Naive thymus-derived CD8-positive, alpha-beta T cell (primary cell): ENCODE measurements at regions of chr7 and their contacts with region 1.

Region 1: DNA sequence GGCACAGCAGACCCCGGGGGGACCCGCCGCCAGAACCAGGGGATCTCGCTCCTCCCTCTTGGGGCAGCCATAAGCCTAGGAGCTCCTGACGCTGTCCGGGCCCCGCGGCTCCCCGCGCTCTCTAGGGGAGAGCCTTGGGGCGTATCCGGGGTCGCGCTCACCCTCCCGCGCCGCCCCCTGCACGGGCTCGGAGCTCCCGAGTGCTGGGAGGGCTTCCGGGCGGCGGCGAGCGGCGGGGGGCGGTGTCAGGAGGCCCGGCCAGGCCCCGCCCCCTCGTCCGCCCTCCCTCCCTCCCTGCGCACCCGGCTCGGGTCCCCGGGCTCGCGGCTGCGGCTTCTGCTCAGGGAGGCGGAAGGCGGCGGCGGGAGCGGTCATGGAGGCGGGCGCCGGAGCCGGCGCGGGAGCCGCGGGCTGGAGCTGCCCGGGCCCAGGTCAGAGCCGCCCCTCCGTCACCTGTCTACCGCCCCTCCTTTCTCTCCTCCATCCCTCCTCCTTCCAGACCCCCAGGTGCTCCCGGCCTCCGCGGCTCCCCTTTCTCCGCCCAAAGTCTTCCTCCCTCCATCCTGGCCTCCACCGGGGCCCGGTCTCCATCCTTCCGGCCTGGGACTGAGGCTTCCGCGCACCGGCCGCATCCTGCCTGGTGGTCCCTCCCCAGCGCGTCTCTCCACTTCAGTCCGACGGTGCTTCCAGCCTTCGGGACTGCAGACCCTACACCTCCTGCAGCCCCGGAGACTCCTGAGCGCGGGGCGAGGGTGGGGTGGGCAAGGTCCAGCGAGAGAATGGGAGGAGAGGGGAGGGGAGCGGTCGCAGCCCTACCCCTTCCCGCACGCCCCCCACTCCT is 427 bp upstream of the CCDC136 start:
- DNase-seq: peak; percentile 63 to 91 (median 81)
- ATAC-seq: peak; percentile 90 to 91
- H3K4me3 Mint-ChIP-seq: peak overlapping the region; percentile 74 to 91 (median 86)
- H3K27ac Mint-ChIP-seq: peak overlapping the region in 8 of 10 donors; percentile 38 to 83 (median 73)
- H3K4me1 Mint-ChIP-seq: peaks cover 9 to 22% (median 20%) of the 10 kb centered on the region in 4 donors
- H3K27me3 Mint-ChIP-seq: no peaks in the 10 kb centered on the region

Region 2: DNA sequence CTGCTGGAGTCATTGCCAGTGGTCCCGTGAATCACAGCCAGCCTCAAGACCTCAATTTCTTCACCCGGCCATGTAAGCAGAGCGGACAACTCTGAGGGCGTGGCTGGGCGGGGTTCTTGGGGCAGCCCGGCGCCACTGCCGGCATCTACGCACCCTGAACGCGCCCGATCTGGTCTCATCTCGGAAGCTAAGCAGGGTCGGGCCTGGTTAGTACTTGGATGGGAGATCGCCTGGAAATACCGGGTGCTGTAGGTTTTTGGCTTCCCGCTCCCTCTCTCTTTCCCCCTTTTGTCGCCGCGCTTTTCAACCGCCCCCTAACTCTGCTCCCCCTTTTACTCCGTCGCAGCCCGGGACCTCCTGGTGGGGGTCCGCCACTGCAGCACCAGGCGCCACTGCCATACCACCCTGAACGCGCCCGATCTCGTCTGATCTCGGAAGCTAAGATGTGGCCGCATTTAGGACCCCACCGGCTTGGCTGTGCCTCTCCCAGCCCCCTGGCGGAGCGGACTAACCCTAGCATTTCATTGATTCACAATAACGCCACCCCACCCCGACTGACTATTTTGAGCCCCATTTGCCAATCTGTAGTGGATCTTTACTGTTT is 93.9 kb before region 1 on chr7:
- POLR2A ChIA-PET with region 1: no interaction called
- DNase-seq: peak in 9 of 10 donors; percentile 11 to 55 (median 36)
- ATAC-seq: peak; percentile 68 to 70
- H3K4me3 Mint-ChIP-seq: peak overlapping the region; percentile 62 to 87 (median 78)
- H3K27ac Mint-ChIP-seq: peak overlapping the region in 1 of 10 donors; percentile 11
- H3K4me1 Mint-ChIP-seq: peaks cover 7 to 17% (median 9%) of the 10 kb centered on the region in 4 donors
- H3K27me3 Mint-ChIP-seq: peaks cover 39 to 80% (median 57%) of the 10 kb centered on the region in 5 donors

Region 3: DNA sequence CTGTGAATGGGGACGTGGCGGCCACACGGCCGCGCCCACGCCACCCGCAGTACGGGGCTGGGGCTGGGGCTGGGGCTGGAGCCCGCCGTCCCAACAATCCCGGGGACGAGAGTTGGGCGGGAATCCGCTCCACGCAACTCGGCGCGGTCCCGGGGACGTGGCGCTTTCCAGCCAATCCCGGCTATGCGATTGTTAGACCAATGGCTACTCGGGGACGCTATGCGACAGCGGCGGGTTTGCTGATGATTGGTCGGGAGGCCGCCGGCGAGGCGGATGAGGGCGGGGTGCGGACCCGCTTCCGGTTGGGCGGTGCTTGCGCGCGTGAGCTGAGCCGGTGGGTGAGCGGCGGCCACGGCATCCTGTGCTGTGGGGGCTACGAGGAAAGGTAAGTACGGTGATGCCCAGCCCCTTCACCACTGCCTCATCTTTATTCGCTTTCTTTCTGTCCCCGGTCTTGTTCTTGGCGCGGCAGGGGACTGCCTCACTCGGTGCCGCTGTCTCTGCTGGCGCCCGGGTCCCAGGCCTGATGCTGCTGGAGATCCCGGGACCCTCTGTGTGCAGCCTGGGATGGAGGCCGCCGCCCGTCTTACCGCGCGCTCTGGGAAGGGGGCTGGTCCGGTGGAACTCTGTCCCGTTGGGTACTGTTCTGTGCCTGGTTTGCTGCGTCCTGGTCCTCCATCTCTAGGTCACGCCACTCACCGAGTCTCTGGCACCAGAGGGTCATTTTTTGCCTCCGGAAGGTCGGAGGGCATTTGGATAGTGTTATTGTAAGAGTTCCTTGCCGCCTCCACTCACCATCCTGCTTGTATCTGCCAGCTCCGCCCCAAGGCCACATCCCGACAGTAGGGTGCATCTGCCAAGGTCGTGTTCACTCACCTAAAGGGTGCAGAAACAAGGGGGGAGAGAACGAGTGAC is 52.0 kb before region 1 on chr7 and contains the start of gene CALU:
- POLR2A ChIA-PET with region 1: interaction called, 14 read pairs
- DNase-seq: peak; percentile 90 to 96 (median 94)
- ATAC-seq: peak; percentile 93 to 95
- H3K4me3 Mint-ChIP-seq: peak within 1 kb of the TSS; percentile 89 to 100 (median 99)
- H3K27ac Mint-ChIP-seq: peak within 1 kb of the TSS; percentile 89 to 100 (median 98)
- H3K4me1 Mint-ChIP-seq: peaks cover 18 to 62% (median 42%) of the 10 kb centered on the region in 4 donors
- H3K27me3 Mint-ChIP-seq: peaks cover 0 to 3% (median 0%) of the 10 kb centered on the region in 5 donors
- polyA plus RNA-seq, gene CALU: 13.6 to 21.5 (median 16.4) TPM

Region 4: GRCh38 chr7:128827248-128827958 is 36.1 kb after region 1 on chr7:
- POLR2A ChIA-PET with region 1: no interaction called
- DNase-seq: peak in 1 of 10 donors; percentile 55
- ATAC-seq: no peak
- H3K4me3 Mint-ChIP-seq: no peak overlapping the region
- H3K27ac Mint-ChIP-seq: no peak overlapping the region
- H3K4me1 Mint-ChIP-seq: peaks cover 3 to 28% (median 18%) of the 10 kb centered on the region in 4 donors
- H3K27me3 Mint-ChIP-seq: peaks cover 14 to 54% (median 31%) of the 10 kb centered on the region in 5 donors